ENCODE measurements at regions of chr4 and their contacts with region 1.

Region 1: GRCh38 chr4:121370729-121371325 is 10.0 kb downstream of the QRFPR start:
- DNase-seq: peak; percentile 45

Region 2: DNA sequence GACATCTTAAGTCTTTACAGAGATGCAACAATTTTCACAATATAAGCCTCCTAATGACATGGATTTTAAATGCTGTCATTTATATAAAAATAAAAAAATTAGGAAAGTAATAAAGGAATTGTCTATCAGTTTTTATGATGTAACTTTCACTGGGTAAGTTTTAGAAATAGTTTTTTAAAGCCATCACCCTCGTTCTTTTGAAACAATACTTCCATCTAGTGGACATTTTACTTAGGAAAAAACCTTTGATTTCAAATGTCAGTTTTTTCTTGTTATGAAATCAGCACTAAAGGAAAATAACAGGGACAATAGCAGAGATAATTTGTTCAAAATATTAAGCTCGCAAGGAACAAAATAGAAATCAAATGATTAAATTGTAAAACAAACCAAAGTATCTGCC is 274.2 kb before region 1 on chr4:
- in situ Hi-C with region 1: no loop called
- DNase-seq: peak; percentile 30

Region 3: GRCh38 chr4:121421594-121421993 is 50.8 kb after region 1 on chr4:
- in situ Hi-C with region 1: no loop called
- DNase-seq: no peak

Region 4: GRCh38 chr4:121656269-121656641 is 285.4 kb after region 1 on chr4:
- in situ Hi-C with region 1: loop called (anchors 25 kb)
- DNase-seq: peak; percentile 55